K562 (cell line): ENCODE measurements at regions of chr3 and their contacts with region 1.

Region 1: DNA sequence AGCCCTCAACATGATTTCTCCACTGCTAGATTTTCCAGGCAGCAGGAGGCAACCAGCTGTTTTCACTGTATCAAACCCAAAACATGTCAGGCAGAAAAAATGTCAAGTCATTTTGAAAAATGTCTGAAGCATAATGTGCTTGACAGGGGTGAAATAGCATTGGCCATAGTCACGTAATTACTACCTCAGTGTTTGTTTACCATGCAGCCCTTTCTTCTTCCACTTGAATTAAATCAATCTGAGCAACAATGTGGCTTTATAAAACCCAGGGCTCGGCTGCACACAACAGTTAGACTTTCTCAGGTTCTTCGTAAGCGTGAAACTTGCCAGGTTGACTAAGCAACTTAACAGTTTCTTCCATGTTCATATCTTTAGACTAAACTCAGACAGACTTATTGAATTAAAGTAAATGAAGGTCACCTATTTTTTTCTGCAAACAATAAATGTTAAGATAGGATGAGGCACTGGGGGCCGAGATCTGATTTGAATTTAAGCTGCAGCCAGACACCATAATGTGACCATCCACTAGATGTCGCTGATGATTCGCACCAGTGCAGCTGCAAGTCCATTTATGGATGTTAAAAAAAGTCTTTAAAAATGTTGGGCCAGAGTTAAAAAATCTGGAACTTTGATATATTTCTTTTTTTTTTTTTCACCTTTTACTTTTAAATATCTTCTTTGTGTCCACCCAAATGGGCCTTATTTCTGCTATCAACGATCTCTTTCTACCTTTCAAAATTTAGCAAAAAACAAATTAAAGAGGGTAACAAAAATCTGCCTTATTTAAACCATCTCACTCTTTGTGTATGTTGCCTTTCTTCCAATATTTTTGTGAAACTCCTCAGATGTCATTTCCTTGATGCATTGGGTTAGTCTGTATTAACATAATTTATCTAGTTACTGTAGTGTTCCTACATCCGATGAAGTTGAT is 305.9 kb downstream of the CACNA2D3 start:
- DNase-seq: peak; percentile 27 to 58 (median 36)
- ATAC-seq: peak; percentile 67
- H3K4me3 ChIP-seq: no peak overlapping the region
- H3K27ac ChIP-seq: no peak overlapping the region
- H3K4me1 ChIP-seq: no peaks in the 10 kb centered on the region
- H3K27me3 ChIP-seq: no peaks in the 10 kb centered on the region
- CTCF ChIP-seq: peak; percentile 54 to 69 (median 56)
- EP300 ChIP-seq: no peak
- POLR2A ChIP-seq: no peak
- RAD21 ChIP-seq: peak; percentile 47 to 60

Region 2: GRCh38 chr3:53938645-53939044 is 489.6 kb before region 1 on chr3:
- CTCF ChIA-PET with region 1: no interaction called
- POLR2A ChIA-PET with region 1: no interaction called
- in situ Hi-C with region 1: no loop called
- intact Hi-C with region 1: loop called (anchors 5 kb)
- DNase-seq: peak; percentile 24 to 48 (median 30)
- ATAC-seq: peak; percentile 77
- H3K4me3 ChIP-seq: no peak overlapping the region
- H3K27ac ChIP-seq: no peak overlapping the region
- H3K4me1 ChIP-seq: no peaks in the 10 kb centered on the region
- H3K27me3 ChIP-seq: no peaks in the 10 kb centered on the region
- CTCF ChIP-seq: peak; percentile 46 to 63 (median 61)
- EP300 ChIP-seq: no peak
- POLR2A ChIP-seq: no peak
- RAD21 ChIP-seq: peak; percentile 57 to 70